Activated CD4-positive, alpha-beta T cell treated with anti-CD3 and anti-CD28 coated beads for 36 hours (primary cell): ENCODE measurements at regions of chr13 and their contacts with region 1.

Region 1: GRCh38 chr13:21458813-21459701 is at the start of gene ZDHHC20:
- DNase-seq: peak; percentile 93
- ATAC-seq: peak; percentile 83
- H3K4me3 Mint-ChIP-seq: peak within 1 kb of the TSS; percentile 93
- H3K27ac Mint-ChIP-seq: peak within 1 kb of the TSS; percentile 88
- H3K4me1 Mint-ChIP-seq: peaks cover 25% of the 10 kb centered on the region
- H3K27me3 Mint-ChIP-seq: no peaks in the 10 kb centered on the region
- total RNA-seq, gene ZDHHC20: 40.2 to 44.9 TPM

Region 2: GRCh38 chr13:20902438-20903163 is 556.5 kb before region 1 on chr13 and contains the start of gene XPO4:
- CTCF ChIA-PET with region 1: no interaction called
- POLR2A ChIA-PET with region 1: no interaction called
- intact Hi-C with region 1: loop called in 1 of 2 experiments (anchors 5 kb)
- DNase-seq: peak; percentile 91
- ATAC-seq: peak; percentile 94
- H3K4me3 Mint-ChIP-seq: peak within 1 kb of the TSS; percentile 91
- H3K27ac Mint-ChIP-seq: peak within 1 kb of the TSS; percentile 92
- H3K4me1 Mint-ChIP-seq: peaks cover 32% of the 10 kb centered on the region
- H3K27me3 Mint-ChIP-seq: no peaks in the 10 kb centered on the region
- total RNA-seq, gene XPO4: 22.8 to 26.4 TPM

Region 3: DNA sequence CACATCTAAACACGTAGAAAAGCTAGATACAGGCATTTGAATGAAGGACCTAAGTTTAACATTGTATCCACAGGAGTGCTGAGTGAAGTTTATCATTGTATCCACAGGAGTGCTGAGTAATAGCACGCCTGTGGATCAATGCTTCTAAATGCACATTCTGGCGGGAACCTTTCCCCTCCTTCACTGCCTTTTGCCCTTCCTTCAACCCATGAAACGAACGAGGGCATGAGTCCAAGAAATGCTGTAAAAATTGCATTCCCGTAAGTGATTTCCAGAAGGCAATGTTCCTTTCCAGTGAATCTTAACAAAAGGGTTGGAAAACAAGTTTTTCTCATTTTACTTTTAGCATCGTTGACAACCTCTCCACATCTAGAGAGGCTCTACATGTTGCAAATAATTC is 88.0 kb before region 1 on chr13:
- CTCF ChIA-PET with region 1: no interaction called
- POLR2A ChIA-PET with region 1: no interaction called
- intact Hi-C with region 1: no loop called
- DNase-seq: no peak
- ATAC-seq: no peak
- H3K4me3 Mint-ChIP-seq: no peak overlapping the region
- H3K27ac Mint-ChIP-seq: no peak overlapping the region
- H3K4me1 Mint-ChIP-seq: no peaks in the 10 kb centered on the region
- H3K27me3 Mint-ChIP-seq: no peaks in the 10 kb centered on the region

Region 4: DNA sequence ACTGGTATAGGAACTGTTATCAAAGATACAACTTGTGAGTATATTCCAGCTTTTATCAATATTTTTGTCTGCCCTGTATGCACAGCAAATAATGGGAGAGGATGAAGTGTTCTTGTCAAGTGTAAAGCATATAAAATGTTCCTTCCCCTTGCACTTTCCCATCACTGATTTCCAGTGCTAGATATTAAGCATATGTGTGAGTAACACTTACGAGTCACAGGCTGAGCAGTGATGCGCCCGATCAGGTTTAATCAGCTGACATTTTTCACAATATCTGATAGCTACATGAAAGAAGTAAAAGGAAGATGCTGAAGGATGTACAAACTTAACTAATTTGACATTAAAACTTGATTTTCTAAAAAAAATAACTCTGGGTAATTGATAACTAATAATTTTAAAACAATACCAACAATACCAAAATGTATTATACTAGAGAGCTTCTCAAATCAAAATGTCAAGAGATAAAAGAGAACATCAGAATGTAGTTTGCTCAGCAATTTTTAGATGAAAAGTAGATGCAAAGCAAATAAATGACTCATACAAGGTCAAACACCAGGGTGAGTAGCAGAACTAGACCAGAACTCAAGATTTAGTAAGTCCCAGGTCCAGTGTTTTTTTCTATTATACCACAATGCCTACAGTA is 56.4 kb before region 1 on chr13:
- CTCF ChIA-PET with region 1: interaction called, 3 read pairs
- POLR2A ChIA-PET with region 1: no interaction called
- intact Hi-C with region 1: loop called (anchors 2 kb)
- DNase-seq: peak; percentile 36
- ATAC-seq: peak; percentile 84
- H3K4me3 Mint-ChIP-seq: no peak overlapping the region
- H3K27ac Mint-ChIP-seq: no peak overlapping the region
- H3K4me1 Mint-ChIP-seq: peaks cover 45% of the 10 kb centered on the region
- H3K27me3 Mint-ChIP-seq: no peaks in the 10 kb centered on the region

Region 5: DNA sequence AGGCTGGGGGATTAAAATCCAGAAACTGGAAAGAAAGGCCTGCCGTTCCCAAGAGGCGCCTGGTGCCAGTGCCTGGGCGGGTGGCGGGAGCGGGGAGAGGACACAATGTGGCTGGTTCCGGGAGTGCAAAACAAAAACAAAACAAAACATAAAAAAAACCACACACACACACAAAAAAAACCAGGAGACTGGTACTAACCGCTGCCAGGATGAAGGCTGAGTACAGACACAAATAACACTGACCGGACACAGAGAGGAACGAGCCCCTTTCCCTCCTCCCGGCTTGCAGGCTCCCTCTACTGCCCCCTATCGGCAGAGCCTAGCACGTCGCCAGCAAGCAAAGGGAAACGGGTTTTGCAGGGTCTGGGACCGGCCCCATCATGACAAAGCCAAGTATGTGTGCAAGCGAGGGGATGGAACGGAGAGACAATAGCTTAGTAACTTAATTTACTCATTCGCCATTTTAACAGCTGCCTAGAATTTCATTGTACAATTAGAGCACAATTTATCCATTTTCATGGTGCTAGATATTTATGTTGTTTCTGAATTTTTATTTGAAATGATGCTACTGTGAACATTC is 17.9 kb after region 1 on chr13:
- CTCF ChIA-PET with region 1: interaction called, 11 read pairs
- POLR2A ChIA-PET with region 1: no interaction called
- intact Hi-C with region 1: loop called (anchors 1 kb)
- DNase-seq: peak; percentile 91
- ATAC-seq: peak; percentile 96
- H3K4me3 Mint-ChIP-seq: peak overlapping the region; percentile 78
- H3K27ac Mint-ChIP-seq: peak overlapping the region; percentile 52
- H3K4me1 Mint-ChIP-seq: peaks cover 8% of the 10 kb centered on the region
- H3K27me3 Mint-ChIP-seq: no peaks in the 10 kb centered on the region

Region 6: DNA sequence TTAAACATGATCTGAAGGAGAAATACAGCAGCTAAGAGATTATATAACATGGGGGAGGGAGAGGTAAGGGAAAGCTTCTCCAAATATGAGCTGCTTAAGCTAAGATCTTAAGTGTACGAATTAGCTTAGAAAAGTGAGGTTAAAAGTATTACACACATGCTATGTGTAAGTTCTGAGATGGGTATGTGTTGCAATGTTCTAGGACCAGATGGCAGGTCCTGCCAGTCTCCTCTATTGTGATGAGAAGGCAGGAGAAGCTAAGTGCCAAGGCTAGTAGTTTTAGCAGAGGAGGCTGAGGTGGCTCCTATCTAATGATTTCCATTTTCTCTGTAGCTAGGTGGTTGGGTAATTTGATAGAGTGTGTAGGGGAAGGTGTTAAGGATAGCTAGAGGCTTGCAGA is 87.3 kb after region 1 on chr13:
- CTCF ChIA-PET with region 1: no interaction called
- POLR2A ChIA-PET with region 1: no interaction called
- intact Hi-C with region 1: no loop called
- DNase-seq: no peak
- ATAC-seq: no peak
- H3K4me3 Mint-ChIP-seq: no peak overlapping the region
- H3K27ac Mint-ChIP-seq: no peak overlapping the region
- H3K4me1 Mint-ChIP-seq: peaks cover 18% of the 10 kb centered on the region
- H3K27me3 Mint-ChIP-seq: no peaks in the 10 kb centered on the region

Region 7: DNA sequence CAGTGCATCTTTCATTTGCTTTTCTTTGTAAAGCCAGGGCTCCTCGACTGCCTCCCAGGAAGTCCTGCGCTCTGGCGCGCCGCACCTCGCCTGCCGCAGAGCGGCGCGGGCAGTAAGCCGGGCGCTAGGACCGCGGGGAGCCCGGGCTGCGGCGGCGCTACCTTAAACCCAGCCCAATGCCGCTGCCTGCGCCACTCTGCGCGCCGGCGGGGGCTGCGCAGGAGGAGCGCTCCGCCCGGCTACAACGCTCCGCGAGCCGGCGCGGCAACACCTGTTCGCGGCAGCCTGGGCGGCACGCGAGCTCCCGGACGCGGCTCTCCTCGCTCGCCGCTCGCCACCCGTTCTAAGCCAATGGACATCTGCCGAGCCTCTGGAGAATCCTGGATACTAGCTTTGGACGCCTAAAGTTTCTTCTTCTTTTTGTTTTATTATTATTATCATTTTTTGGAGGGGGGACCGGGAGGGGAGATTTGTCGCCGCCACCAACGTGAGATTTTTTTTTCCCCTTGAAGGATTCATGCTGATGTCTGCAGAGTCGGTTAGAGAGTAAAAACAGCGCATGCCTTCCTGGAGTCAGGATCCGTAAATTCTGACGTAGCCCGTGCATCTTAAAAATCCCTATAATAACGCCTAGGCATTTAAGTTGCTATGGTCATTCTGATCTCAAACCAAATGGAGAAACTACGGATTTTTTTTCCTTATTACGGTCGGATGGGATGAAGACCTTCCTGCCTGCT is 212.0 kb after region 1 on chr13 and contains the start of gene FGF9:
- CTCF ChIA-PET with region 1: no interaction called
- POLR2A ChIA-PET with region 1: no interaction called
- intact Hi-C with region 1: loop called in 1 of 2 experiments (anchors 1 kb)
- DNase-seq: peak; percentile 88
- ATAC-seq: peak; percentile 78
- H3K4me3 Mint-ChIP-seq: peak within 1 kb of the TSS; percentile 76
- H3K27ac Mint-ChIP-seq: peak within 1 kb of the TSS; percentile 53
- H3K4me1 Mint-ChIP-seq: peaks cover 45% of the 10 kb centered on the region
- H3K27me3 Mint-ChIP-seq: peaks cover 43% of the 10 kb centered on the region
- total RNA-seq, gene FGF9: 0.19 TPM in 1 of 2 experiments, not detected in the other